Stomach (tissue), 19 donors: ENCODE measurements at regions of chr20 and their contacts with region 1.

Region 1: GRCh38 chr20:63537525-63538203 is 488 bp upstream of the PTK6 start:
- DNase-seq: peak; percentile 96 to 97
- H3K4me3 ChIP-seq: peak overlapping the region; percentile 28 to 50 (median 32)
- H3K27ac ChIP-seq: peak overlapping the region; percentile 88 to 96 (median 90)
- H3K4me1 ChIP-seq: peaks cover 38 to 87% (median 61%) of the 10 kb centered on the region in 4 donors
- H3K27me3 ChIP-seq: peaks cover 0 to 57% (median 11%) of the 10 kb centered on the region in 3 donors
- CTCF ChIP-seq: peak in 6 of 7 experiments; percentile 80 to 98 (median 94)
- EP300 ChIP-seq: no peak
- POLR2A ChIP-seq: peak in 2 of 4 donors; percentile 52 to 64

Region 2: DNA sequence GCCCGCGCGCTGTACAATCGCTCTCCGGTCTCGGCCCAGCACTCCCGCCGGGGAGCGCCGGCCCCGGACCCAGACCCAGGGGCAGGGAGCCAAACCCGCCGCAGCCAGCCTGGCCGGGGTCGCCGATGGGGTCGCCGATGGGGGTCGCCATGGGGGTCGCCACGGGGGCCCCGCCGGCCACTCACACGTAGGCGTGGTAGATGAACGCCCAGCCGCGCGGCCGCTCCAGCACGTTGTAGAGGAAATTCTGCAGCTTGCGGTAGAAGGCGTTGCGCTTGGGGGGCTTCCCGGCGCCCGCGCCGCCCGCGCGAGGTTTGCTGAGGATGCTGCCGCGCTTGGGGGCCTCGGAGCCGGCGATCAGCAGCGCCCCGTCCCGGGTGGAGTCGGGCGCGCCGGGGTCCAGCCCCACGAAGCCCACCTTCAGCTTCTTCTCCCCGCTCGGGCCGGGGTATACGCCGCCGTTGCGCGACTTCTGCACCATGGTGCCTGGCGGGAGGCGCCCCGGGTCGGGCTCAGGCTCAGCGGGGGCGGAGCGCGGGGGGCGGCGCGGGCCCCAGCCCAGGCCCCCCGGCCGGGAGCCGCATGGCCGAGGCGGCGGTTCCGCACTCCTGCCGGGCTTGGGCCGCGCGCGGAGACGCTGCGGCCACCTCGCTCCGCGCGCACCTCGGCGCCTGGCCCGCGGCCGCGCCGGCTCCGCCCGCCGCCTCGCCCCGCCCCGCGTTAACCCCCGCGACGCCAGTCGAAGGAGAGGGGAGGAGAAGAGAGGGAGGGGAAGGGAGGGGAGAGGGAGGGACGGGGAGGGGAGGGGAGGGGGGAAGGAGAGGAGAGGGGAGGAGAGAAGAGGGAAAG is 65.5 kb before region 1 on chr20 and contains the start of gene KCNQ2:
- intact Hi-C with region 1: no loop called
- DNase-seq: peak in 1 of 2 donors; percentile 46
- H3K4me3 ChIP-seq: peak within 1 kb of the TSS; percentile 11 to 41 (median 35)
- H3K27ac ChIP-seq: no peak within 1 kb of the TSS
- H3K4me1 ChIP-seq: peaks cover 11 to 18% (median 13%) of the 10 kb centered on the region in 4 donors
- H3K27me3 ChIP-seq: peaks cover 28 to 100% (median 85%) of the 10 kb centered on the region in 3 donors
- CTCF ChIP-seq: no peak
- EP300 ChIP-seq: no peak
- POLR2A ChIP-seq: no peak
- total RNA-seq, gene KCNQ2: 2.2 TPM in 1 of 5 donors, not detected in the others

Region 3: GRCh38 chr20:63482856-63483695 is 54.6 kb before region 1 on chr20:
- intact Hi-C with region 1: no loop called
- DNase-seq: peak in 1 of 2 donors; percentile 75
- H3K4me3 ChIP-seq: no peak overlapping the region
- H3K27ac ChIP-seq: no peak overlapping the region
- H3K4me1 ChIP-seq: peaks cover 0 to 8% (median 7%) of the 10 kb centered on the region in 4 donors
- H3K27me3 ChIP-seq: peaks cover 8 to 100% (median 63%) of the 10 kb centered on the region in 3 donors
- CTCF ChIP-seq: no peak
- EP300 ChIP-seq: no peak
- POLR2A ChIP-seq: no peak

Region 4: GRCh38 chr20:63574156-63574828 is 36.6 kb after region 1 on chr20 and contains the start of gene HELZ2:
- intact Hi-C with region 1: no loop called
- DNase-seq: peak; percentile 87 to 93
- H3K4me3 ChIP-seq: peak within 1 kb of the TSS; percentile 68 to 86 (median 73)
- H3K27ac ChIP-seq: peak within 1 kb of the TSS; percentile 67 to 93 (median 91)
- H3K4me1 ChIP-seq: peaks cover 12 to 38% (median 30%) of the 10 kb centered on the region in 4 donors
- H3K27me3 ChIP-seq: peaks cover 0 to 5% (median 4%) of the 10 kb centered on the region in 3 donors
- CTCF ChIP-seq: no peak
- EP300 ChIP-seq: no peak
- POLR2A ChIP-seq: no peak
- total RNA-seq, gene HELZ2: 27.4 to 95.5 (median 41.2) TPM

Region 5: GRCh38 chr20:63973636-63974402 is 436.2 kb after region 1 on chr20:
- intact Hi-C with region 1: loop called (anchors 5 kb)
- DNase-seq: peak; percentile 90 to 96
- H3K4me3 ChIP-seq: peak overlapping the region; percentile 29 to 36 (median 32)
- H3K27ac ChIP-seq: peak overlapping the region; percentile 27 to 68 (median 41)
- H3K4me1 ChIP-seq: peaks cover 23 to 48% (median 42%) of the 10 kb centered on the region in 4 donors
- H3K27me3 ChIP-seq: peaks cover 0 to 3% (median 0%) of the 10 kb centered on the region in 3 donors
- CTCF ChIP-seq: peak in 5 of 7 experiments; percentile 95 to 100 (median 98)
- EP300 ChIP-seq: no peak
- POLR2A ChIP-seq: no peak